Gastrocnemius medialis (tissue), 4 donors: ENCODE measurements at regions of chr7 and their contacts with region 1.

Region 1: DNA sequence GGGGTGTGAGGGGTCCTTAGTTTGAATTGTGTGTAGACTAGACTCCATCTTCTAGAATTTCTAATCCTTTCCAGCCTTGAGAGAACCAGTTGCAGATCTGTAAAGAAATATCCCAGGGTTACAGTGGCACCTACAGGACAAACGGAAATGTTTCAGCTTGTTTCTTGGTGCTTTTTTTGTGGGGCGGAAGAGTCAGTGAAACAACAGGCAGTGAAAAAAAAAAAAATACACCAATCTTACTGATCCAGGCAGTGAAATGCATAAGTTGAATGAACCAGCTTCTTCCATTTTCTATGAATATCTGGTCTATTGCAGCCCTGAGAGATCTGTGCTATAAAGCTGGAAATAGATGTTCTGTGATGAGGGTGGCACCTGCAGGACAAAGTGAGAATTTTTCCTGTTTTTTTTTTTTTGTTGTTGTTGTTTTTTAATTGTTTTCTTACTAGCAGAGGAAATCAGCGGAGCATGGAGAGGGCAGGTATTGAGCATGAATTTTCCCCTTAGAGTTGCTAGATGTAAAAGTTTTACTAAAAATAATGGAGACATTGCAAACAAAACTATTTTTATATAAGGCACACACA is 81.9 kb upstream of the DYNC1I1 start:
- DNase-seq: peak in 1 of 2 donors; percentile 12
- ATAC-seq: peak; percentile 33 to 63
- H3K4me3 ChIP-seq: peak overlapping the region in 3 of 4 donors; percentile 3 to 37 (median 26)
- H3K27ac ChIP-seq: no peak overlapping the region
- H3K4me1 ChIP-seq: peaks cover 24 to 25% of the 10 kb centered on the region in 2 donors
- H3K27me3 ChIP-seq: no peaks in the 10 kb centered on the region
- CTCF ChIP-seq: peak; percentile 44 to 71 (median 59)
- POLR2A ChIP-seq: no peak

Region 2: GRCh38 chr7:94509879-94510581 is 1180.4 kb before region 1 on chr7:
- in situ Hi-C with region 1: no loop called
- intact Hi-C with region 1: loop called (anchors 10 kb)
- DNase-seq: peak; percentile 43 to 59
- ATAC-seq: peak; percentile 85 to 90
- H3K4me3 ChIP-seq: peak overlapping the region; percentile 80 to 94 (median 88)
- H3K27ac ChIP-seq: peak overlapping the region; percentile 88 to 95 (median 94)
- H3K4me1 ChIP-seq: peaks cover 28 to 36% of the 10 kb centered on the region in 2 donors
- H3K27me3 ChIP-seq: no peaks in the 10 kb centered on the region
- CTCF ChIP-seq: peak in 3 of 5 experiments; percentile 9 to 53 (median 33)
- POLR2A ChIP-seq: peak in 1 of 2 donors; percentile 18

Region 3: GRCh38 chr7:95511716-95512260 is 178.7 kb before region 1 on chr7:
- in situ Hi-C with region 1: loop called in 3 of 4 experiments (anchors 5 to 10 kb)
- intact Hi-C with region 1: loop called (anchors 2 kb)
- DNase-seq: peak; percentile 42 to 66
- ATAC-seq: peak; percentile 93 to 98
- H3K4me3 ChIP-seq: peak overlapping the region in 3 of 4 donors; percentile 22 to 40 (median 28)
- H3K27ac ChIP-seq: peak overlapping the region in 1 of 4 donors; percentile 32
- H3K4me1 ChIP-seq: peaks cover 0 to 4% of the 10 kb centered on the region in 2 donors
- H3K27me3 ChIP-seq: no peaks in the 10 kb centered on the region
- CTCF ChIP-seq: peak; percentile 63 to 94 (median 85)
- POLR2A ChIP-seq: no peak

Region 4: DNA sequence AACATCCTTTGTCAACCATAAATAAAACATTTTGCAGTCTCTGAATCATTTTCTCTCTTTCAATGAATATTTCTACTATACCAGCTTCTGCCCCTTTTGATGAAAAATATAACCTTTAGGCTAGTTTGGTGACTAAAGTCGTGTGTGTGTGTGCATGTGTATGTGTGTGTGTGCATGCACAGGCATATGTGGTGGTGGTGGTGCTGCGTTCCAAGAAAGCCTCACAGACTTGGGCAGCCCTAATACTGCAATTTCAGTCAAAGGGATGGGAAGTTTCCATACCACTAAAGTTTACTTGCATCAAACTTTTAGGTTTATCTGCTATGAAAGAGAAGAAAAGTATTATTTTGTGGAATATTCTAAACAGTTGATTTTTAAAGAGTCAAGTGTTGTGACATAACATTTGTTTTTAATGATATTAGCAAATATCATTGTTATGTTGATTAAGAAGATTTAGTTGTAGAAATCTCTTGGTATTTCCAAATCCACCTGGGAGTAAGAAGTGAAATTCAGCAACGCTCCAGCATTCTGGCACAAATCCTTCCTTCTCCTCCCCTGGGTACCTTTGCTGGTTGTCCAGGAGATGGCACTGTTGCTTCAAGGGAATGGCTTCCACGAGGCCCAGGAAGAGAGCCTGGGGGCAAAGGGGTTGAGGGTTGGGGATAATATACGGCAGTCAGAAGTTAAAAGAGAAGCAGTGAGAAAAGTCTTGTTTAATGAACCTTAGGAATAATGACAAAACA is 163.3 kb before region 1 on chr7:
- in situ Hi-C with region 1: loop called in 1 of 4 experiments (anchors 5 kb)
- intact Hi-C with region 1: loop called (anchors 1 kb)
- DNase-seq: peak; percentile 30 to 42
- ATAC-seq: peak; percentile 87 to 95
- H3K4me3 ChIP-seq: no peak overlapping the region
- H3K27ac ChIP-seq: no peak overlapping the region
- H3K4me1 ChIP-seq: peaks cover 9 to 25% of the 10 kb centered on the region in 2 donors
- H3K27me3 ChIP-seq: no peaks in the 10 kb centered on the region
- CTCF ChIP-seq: peak; percentile 87 to 96 (median 89)
- POLR2A ChIP-seq: no peak